A549 (cell line): ENCODE measurements at regions of chr3 and their contacts with region 1.

Region 1: GRCh38 chr3:13479581-13480339 is at the start of gene HDAC11:
- DNase-seq: peak; percentile 96 to 99
- ATAC-seq: peak; percentile 90 to 95
- H3K4me3 ChIP-seq: peak within 1 kb of the TSS; percentile 77
- H3K27ac ChIP-seq: peak within 1 kb of the TSS; percentile 86 to 93
- H3K4me1 ChIP-seq: peaks cover 15% of the 10 kb centered on the region
- CTCF ChIP-seq: no peak
- EP300 ChIP-seq: no peak
- POLR2A ChIP-seq: peak; percentile 51
- RAD21 ChIP-seq: no peak
- polyA plus RNA-seq, gene HDAC11: 5.6 and 5.8 TPM in 2 replicates

Region 2: DNA sequence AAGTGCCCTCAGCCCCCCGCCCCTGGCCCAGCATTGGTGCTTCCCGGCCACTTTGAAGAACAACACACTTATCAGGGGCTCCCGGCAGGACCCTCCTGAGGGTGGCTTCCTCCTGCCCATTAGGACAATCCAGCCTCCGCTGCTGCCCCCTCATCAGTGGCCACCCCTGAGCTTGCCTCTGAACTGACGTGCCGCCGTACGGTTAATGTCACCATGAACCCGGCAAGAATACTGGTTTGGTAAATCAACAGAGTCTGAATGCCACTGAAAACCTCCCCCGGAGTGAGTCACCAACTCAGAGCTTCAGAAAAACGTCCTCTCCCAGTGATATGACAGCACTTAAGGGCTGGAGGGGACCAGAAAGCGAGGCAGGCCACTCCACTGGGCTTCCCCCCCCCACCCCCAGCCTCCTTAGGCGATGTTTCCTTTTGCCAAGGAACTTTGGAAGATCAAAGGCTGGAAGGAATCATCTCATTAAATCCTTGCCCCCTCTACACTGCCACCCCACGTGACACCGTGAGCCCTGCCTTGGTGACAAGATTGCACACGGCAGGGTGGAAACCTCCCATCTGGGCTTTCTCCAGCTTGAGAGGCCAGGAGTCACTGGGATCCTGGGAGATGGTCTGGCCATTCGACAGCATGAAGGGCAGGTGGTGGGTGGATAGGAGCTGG is 201.8 kb before region 1 on chr3:
- CTCF ChIA-PET with region 1: no interaction called
- POLR2A ChIA-PET with region 1: no interaction called
- DNase-seq: no peak
- ATAC-seq: no peak
- H3K4me3 ChIP-seq: no peak overlapping the region
- H3K27ac ChIP-seq: no peak overlapping the region
- H3K4me1 ChIP-seq: peaks cover 6% of the 10 kb centered on the region; the same call in 1 of the 3 replicates
- CTCF ChIP-seq: no peak
- EP300 ChIP-seq: no peak
- POLR2A ChIP-seq: no peak
- RAD21 ChIP-seq: no peak

Region 3: DNA sequence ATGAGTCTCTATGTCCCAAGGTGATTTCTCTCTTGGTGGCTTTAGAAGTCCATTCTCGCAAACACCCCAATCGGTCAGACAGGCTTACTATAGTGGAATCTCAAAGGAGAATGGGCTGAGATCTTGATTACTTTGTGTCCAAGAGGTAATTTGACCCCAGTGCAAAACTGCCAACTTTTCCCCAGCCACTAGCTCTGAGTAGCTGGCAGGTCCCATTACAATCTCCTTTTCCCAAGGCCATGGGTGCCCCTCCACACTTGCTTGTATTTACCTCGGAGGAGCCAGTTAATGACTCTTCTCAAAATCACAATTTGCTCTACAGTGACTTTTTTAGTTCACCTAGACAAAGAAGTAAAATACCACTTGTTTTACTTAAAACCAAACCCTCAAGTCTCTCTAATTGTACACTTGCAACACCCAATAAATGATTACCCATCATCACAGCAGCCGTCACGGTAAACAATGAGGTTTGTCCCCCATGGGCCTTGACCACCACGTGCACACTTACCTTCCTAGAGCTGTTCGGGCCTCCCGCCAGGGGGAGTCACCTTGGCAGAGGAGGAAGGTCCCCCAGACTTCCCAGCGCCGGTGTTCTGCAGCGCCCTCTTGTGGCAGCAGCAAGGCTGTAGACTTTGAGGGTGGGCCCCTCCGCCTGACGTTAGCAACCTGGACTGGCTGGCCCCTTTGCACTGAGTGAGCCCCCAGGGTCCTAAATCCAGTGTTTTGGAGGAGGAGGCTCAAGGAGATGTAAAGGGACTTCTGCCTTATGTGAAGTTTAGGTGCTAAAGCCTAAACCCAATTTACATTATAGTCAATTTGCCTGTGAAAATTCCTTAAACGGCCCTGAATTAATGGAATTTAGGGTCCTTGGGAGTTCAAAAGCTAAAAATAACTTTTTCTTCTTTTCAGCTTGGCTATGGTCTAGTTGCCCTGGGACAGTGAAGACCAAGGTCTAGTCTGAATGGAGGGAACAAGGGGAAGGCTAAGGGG is 18.3 kb before region 1 on chr3:
- CTCF ChIA-PET with region 1: interaction called, 15 read pairs
- POLR2A ChIA-PET with region 1: no interaction called
- DNase-seq: peak; percentile 58 to 84
- ATAC-seq: peak; percentile 74 to 96
- H3K4me3 ChIP-seq: no peak overlapping the region
- H3K27ac ChIP-seq: no peak overlapping the region
- H3K4me1 ChIP-seq: no peaks in the 10 kb centered on the region
- CTCF ChIP-seq: peak; percentile 55
- EP300 ChIP-seq: no peak
- POLR2A ChIP-seq: no peak
- RAD21 ChIP-seq: peak; percentile 26 to 52; a peak in 3 of 5 replicates